Astrocyte of the cerebellum (primary cell): ENCODE measurements at regions of chr2 and their contacts with region 1.

Region 1: DNA sequence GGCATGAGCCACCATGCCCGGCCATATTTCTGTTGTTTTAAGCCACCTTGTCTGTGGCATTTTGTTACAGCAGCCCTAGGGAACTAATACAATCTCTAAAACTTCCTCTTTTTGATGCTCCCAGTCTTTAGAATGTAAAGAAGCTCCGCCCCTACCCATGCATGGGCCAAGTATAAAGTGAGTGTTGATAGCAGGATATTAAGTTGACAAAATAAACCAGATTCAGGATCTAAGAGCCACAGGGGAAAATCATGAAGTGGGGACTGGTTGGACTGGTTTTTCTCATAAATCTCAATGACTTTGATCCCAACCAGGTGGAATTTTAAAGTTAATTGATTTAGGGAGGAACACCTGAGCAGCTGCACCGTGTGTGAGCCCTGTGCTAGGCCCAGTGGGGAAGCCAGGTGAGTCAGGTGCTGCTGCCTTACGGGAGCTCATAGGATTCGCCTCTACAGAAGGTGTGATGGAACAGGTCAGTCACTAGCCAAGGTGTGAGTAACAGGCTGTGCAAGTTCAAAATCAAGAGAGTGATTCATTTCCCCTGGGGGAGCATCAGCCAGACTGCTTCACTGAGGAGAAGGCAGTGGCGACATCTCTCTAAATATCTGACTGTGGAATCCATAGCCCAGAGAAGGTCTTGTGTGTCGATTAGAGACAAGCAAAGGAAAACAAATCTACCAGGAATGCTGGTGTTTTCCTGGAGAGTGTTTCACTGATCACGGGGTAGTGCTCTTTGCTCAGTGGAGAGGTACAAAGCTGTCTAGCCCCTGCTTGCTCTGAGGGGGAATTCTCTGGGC is 63.0 kb upstream of the MSH2 start:
- DNase-seq: no peak
- H3K4me3 ChIP-seq: no peak overlapping the region
- CTCF ChIP-seq: no peak

Region 2: GRCh38 chr2:47300609-47301276 is 39.2 kb before region 1 on chr2:
- in situ Hi-C with region 1: loop called (anchors 5 kb)
- DNase-seq: no peak
- H3K4me3 ChIP-seq: no peak overlapping the region
- CTCF ChIP-seq: no peak

Region 3: DNA sequence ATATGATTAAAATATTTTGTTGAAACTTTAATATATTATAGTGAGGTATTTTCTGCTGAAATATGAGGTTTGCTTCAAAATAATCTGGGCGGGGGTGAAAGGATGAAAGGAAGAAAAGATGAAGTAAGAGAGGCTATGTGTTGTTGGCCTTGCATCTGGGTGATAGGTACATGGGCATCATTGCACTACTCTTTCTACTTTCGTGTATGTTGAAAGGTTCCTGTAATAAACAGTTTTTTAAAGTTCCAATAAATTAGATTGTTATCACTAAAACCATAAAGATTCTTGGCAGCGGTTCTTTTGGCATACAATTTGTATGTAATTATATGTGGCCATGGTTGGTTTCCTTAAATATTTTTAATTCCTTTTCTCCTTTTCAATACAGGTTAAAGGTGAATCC is 39.4 kb after region 1 on chr2:
- in situ Hi-C with region 1: loop called (anchors 5 kb)
- DNase-seq: no peak
- H3K4me3 ChIP-seq: no peak overlapping the region
- CTCF ChIP-seq: no peak

Region 4: DNA sequence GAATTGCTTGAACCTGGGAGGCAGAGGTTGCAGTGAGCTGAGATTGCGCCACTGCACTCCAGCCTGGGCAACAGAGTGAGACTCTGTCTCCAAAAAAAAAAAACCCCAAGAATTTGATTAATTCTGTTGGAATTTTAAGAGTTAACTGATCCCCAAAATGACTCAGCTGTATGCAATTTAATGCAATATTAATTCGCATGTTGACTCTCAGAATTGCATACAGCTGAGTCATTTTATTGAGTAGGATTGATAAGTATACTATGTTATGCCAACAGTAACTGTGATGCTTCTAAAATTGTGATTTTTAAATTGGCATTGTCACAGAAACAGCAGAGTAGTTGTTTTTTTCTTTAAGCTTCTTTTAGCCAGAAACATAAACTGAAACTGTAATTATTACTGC is 82.6 kb after region 1 on chr2:
- in situ Hi-C with region 1: no loop called
- DNase-seq: no peak
- H3K4me3 ChIP-seq: no peak overlapping the region
- CTCF ChIP-seq: no peak